GM12878 (cell line): ENCODE measurements at regions of chr21 and their contacts with region 1.

Region 1: DNA sequence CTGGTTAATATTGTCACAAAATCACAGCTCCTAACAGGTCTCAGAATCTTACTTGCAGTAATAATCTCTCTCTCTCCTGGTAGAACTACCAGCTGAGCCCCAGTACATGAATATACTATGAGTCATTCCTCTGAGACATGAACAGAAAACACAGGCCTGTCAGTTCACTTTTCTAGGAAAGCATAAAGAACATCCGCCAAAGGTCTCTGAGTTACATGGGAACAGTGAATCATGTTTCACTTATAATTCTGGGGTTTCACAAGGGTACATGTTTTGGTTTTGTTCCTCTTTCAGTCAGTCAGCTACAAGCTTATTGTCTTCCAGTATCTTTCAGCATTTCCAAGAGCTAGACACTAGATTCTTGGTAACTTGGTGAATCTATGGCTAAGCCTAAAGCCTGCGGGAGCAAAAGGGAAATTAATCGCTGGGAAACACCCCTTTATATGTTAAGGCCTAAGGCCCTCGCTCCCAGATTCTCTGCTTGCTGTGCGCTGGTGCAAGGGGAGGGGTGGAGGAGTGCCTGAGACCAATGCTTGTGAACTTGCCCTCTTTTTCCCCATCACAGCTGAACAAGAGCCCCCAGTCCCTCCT is 31.7 kb downstream of the IFNGR2 start:
- DNase-seq: peak; percentile 99
- ATAC-seq: peak; percentile 89
- H3K4me3 ChIP-seq: no peak overlapping the region
- H3K27ac ChIP-seq: peak overlapping the region; percentile 92
- H3K4me1 ChIP-seq: peaks cover 41% of the 10 kb centered on the region
- H3K27me3 ChIP-seq: no peaks in the 10 kb centered on the region
- CTCF ChIP-seq: no peak
- EP300 ChIP-seq: peak in 1 of 2 experiments; percentile 77; a peak in 2 of 4 replicates
- POLR2A ChIP-seq: no peak
- RAD21 ChIP-seq: no peak

Region 2: DNA sequence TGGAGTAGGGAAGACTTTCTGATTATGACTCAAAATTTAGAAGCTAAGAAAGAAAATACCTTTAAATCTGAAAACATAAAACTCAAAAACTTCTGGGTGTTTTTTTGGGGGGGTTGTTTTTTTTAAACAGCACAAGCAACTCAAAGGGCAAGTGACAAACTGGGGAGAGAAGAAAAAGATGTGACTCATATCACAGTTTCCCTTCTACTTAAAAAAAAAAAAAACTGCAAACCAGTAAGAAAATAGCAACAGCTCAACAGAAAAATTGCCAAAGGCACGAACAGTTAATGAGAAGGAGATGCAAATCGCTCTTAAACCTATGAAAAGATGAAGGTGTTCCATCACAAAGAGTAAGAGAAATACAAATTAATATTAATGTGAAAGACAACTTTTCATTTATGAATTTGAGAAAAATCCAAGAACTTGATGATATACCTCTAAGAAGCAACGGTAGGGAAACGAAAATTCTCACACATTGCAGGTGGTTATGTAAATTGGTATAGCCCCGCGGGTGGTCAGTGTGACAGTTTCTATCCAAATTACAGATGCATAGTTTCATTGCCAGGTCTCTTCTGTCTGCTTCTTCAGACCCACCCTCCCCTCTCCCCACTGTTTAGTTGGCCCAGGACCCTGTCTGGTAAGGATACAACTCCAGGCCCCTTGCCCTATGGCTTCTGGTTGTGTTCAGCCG is 196.2 kb before region 1 on chr21:
- CTCF ChIA-PET with region 1: interaction called, 5 read pairs
- POLR2A ChIA-PET with region 1: interaction called, 4 read pairs
- RAD21 ChIA-PET with region 1: interaction called, 11 read pairs
- SMC1A ChIA-PET with region 1: interaction called, 5 read pairs
- in situ Hi-C with region 1: no loop called
- intact Hi-C with region 1: no loop called
- DNase-seq: peak; percentile 76
- ATAC-seq: peak; percentile 79
- H3K4me3 ChIP-seq: peak overlapping the region; percentile 66
- H3K27ac ChIP-seq: peak overlapping the region; percentile 86
- H3K4me1 ChIP-seq: peaks cover 56% of the 10 kb centered on the region
- H3K27me3 ChIP-seq: no peaks in the 10 kb centered on the region
- CTCF ChIP-seq: no peak
- EP300 ChIP-seq: peak; percentile 79 to 96
- POLR2A ChIP-seq: 0 out of 2 replicates have a peak, but pooled peaks have one; percentile 40
- RAD21 ChIP-seq: 0 out of 2 replicates have a peak, but pooled peaks have one; percentile 10

Region 3: DNA sequence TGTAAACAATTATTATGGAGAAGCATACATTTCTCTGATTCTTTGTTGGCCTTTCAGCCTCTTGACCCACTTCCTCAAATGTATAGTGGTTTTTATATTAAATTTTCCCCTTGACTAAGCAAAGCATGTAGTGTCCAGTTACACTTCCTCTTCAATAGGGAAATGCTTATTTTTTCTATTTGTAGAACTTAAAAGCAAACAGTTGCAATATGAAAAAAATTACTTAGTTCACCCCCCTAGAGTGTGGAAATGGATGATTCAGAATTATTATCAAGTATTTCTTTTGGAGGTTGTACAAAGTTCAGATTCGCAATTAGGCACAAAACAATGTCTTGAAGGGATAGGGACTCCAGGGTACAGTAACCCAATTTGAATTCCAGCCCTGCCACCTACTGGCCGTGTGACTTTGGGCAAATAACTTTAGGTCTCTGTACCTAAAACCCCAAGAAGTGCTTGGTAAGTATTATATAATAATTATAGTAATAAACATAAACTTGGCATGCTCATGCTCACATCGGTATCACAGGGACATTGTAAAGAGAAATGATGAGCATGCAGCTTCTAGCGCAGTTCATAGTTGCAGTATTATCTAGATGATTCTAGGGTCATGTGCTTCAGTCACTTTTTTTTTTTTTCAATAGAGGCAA is 60.3 kb before region 1 on chr21:
- CTCF ChIA-PET with region 1: interaction called, 11 read pairs
- POLR2A ChIA-PET with region 1: interaction called, 12 read pairs
- RAD21 ChIA-PET with region 1: interaction called, 148 read pairs
- SMC1A ChIA-PET with region 1: interaction called, 20 read pairs
- in situ Hi-C with region 1: no loop called
- intact Hi-C with region 1: no loop called
- DNase-seq: no peak
- ATAC-seq: peak; percentile 87
- H3K4me3 ChIP-seq: no peak overlapping the region
- H3K27ac ChIP-seq: no peak overlapping the region
- H3K4me1 ChIP-seq: peaks cover 17% of the 10 kb centered on the region
- H3K27me3 ChIP-seq: no peaks in the 10 kb centered on the region
- CTCF ChIP-seq: peak; percentile 62 to 74 (median 63)
- EP300 ChIP-seq: peak in 1 of 2 experiments; percentile 27; a peak in 1 of 4 replicates
- POLR2A ChIP-seq: no peak
- RAD21 ChIP-seq: peak; percentile 77

Region 4: DNA sequence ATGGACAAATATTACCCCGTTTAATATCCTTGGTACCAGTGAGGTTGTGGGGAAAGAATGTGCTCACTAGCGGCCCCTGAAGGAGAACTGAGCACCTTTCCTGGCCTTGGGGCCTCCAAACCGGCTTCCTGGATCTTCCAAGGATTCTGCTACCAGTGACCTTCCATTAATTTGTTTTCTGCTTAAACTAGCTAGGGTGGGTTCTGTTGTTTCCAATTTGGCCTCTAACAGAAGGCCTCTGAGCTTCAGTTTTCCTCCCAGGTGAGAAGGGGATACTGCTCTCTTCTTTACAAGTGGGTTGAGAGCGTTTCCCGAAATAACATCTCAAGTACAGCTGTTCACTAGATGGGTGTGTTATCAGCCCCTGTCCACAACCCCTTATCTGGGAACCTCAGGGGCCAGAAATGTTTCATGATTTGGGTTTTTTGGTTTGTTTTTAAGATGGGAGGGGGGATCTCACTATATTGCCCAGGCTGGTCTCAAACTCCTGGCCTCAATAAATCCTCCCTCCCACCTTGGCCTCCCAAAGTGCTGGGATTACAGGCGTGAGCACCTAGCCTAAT is 48.6 kb before region 1 on chr21:
- CTCF ChIA-PET with region 1: interaction called, 10 read pairs
- POLR2A ChIA-PET with region 1: interaction called, 12 read pairs
- RAD21 ChIA-PET with region 1: interaction called, 148 read pairs
- SMC1A ChIA-PET with region 1: interaction called, 33 read pairs
- in situ Hi-C with region 1: no loop called
- intact Hi-C with region 1: loop called (anchors 1 kb)
- DNase-seq: no peak
- ATAC-seq: no peak
- H3K4me3 ChIP-seq: no peak overlapping the region
- H3K27ac ChIP-seq: no peak overlapping the region
- H3K4me1 ChIP-seq: peaks cover 35% of the 10 kb centered on the region
- H3K27me3 ChIP-seq: no peaks in the 10 kb centered on the region
- CTCF ChIP-seq: peak in 1 of 3 experiments; percentile 34; a peak in 1 of 6 replicates
- EP300 ChIP-seq: no peak
- POLR2A ChIP-seq: no peak
- RAD21 ChIP-seq: no peak

Region 5: GRCh38 chr21:33403779-33404585 is 30.9 kb before region 1 on chr21:
- CTCF ChIA-PET with region 1: interaction called, 11 read pairs
- POLR2A ChIA-PET with region 1: interaction called, 27 read pairs
- RAD21 ChIA-PET with region 1: interaction called, 69 read pairs
- SMC1A ChIA-PET with region 1: interaction called, 42 read pairs
- in situ Hi-C with region 1: no loop called
- intact Hi-C with region 1: loop called (anchors 2 kb)
- DNase-seq: no peak
- ATAC-seq: peak; percentile 60
- H3K4me3 ChIP-seq: peak overlapping the region; percentile 84
- H3K27ac ChIP-seq: peak overlapping the region; percentile 97
- H3K4me1 ChIP-seq: peaks cover 15% of the 10 kb centered on the region
- H3K27me3 ChIP-seq: no peaks in the 10 kb centered on the region
- CTCF ChIP-seq: no peak
- EP300 ChIP-seq: no peak
- POLR2A ChIP-seq: peak; percentile 77
- RAD21 ChIP-seq: no peak

Region 6: DNA sequence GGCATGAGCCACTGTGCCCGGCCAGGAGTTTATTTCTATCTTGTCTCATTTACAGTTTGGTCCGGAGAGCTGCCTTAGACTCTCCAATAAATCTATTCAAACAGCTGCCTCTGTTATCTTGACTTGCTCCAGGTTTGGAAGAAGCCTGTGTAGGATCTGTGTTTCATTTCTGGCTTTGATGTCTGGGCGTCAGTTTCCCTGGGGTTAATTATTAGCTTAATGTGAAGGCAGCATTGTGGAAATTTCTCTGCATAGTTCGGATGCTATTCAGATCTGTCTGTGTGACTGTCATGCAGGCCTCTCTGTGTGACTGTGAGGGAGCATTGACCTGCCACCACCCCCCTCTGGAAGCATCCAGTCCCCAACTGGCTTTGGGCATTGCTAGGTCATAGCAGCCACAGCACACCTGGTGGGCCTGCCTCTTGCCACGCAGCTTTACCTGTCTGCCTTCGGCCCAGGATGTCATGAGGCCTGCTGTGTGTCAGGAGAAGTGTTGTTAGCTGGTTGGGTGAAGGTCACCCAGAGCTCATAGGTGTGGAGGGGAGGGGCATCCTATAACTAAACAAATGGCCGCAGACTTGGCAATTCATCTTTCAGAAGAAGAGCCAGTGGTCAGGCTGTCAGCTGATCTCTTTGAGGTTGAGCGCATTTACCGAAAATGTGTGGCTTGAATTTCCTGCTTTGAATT is 21.9 kb before region 1 on chr21:
- CTCF ChIA-PET with region 1: interaction called, 4 read pairs
- POLR2A ChIA-PET with region 1: interaction called, 7 read pairs
- RAD21 ChIA-PET with region 1: interaction called, 69 read pairs
- SMC1A ChIA-PET with region 1: interaction called, 42 read pairs
- in situ Hi-C with region 1: no loop called
- intact Hi-C with region 1: no loop called
- DNase-seq: no peak
- ATAC-seq: peak; percentile 84
- H3K4me3 ChIP-seq: peak overlapping the region; percentile 10; the same call in 1 of the 2 replicates
- H3K27ac ChIP-seq: peak overlapping the region; percentile 22; the same call in 1 of the 2 replicates
- H3K4me1 ChIP-seq: peaks cover 22% of the 10 kb centered on the region
- H3K27me3 ChIP-seq: no peaks in the 10 kb centered on the region
- CTCF ChIP-seq: no peak
- EP300 ChIP-seq: no peak
- POLR2A ChIP-seq: peak; percentile 57
- RAD21 ChIP-seq: no peak

Region 7: DNA sequence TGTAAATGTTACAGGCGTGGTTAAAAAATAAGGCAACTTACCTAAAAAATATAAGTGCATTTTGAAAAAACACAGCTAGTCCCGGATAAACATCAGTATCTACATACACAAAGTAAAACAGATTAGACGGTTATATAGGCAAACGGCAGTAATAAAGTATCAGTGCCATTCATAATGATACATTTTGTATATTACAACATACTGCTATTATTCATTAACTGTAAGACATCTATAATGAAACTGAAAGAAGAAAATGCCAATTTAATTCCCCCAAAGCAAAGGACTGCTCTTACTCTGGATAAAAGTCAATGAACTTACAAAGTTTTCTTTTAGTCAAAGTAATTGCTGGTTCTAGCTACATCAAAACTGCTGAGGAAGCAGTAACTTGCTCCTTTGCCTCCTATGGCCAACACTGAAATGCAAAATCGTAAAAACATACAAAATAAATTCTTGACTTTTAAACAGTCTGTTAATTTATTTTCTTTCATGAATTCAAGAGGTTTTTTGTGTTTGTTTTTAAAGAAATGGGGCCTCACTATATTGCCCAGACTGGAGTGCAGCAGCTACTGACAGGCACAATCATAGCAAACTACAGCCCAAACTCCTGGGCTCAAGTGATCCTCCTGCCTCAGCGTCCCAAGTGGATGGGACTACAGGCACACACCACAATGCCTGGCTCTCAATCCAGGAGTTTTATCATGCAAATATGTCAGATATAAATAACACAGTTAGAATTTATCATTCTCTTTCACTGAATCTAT is 21.0 kb after region 1 on chr21:
- CTCF ChIA-PET with region 1: no interaction called
- POLR2A ChIA-PET with region 1: no interaction called
- RAD21 ChIA-PET with region 1: no interaction called
- SMC1A ChIA-PET with region 1: no interaction called
- in situ Hi-C with region 1: no loop called
- intact Hi-C with region 1: no loop called
- DNase-seq: no peak
- ATAC-seq: peak; percentile 46
- H3K4me3 ChIP-seq: no peak overlapping the region
- H3K27ac ChIP-seq: no peak overlapping the region
- H3K4me1 ChIP-seq: no peaks in the 10 kb centered on the region
- H3K27me3 ChIP-seq: no peaks in the 10 kb centered on the region
- CTCF ChIP-seq: no peak
- EP300 ChIP-seq: no peak
- POLR2A ChIP-seq: no peak
- RAD21 ChIP-seq: no peak

Region 8: DNA sequence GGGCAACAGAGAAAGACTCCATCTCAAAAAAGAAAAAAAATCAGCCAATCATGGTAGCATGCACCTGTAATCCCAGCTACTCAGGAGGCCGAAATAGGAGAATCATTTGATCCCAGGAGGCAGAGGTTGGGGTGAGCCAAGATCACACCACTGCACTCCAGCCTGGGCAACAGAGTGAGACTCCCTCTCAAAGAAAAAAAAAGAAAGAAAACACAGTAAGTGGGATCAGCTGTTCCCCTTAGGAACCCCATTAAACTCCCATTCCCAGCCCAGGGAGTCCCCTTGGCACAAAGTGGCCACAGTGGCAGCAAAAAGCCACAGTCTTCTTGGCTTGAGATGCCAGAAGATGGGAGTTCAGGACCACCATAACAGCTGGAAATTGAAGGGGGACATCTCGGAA is 35.8 kb after region 1 on chr21:
- CTCF ChIA-PET with region 1: no interaction called
- POLR2A ChIA-PET with region 1: no interaction called
- RAD21 ChIA-PET with region 1: no interaction called
- SMC1A ChIA-PET with region 1: no interaction called
- in situ Hi-C with region 1: no loop called
- intact Hi-C with region 1: no loop called
- DNase-seq: no peak
- ATAC-seq: no peak
- H3K4me3 ChIP-seq: no peak overlapping the region
- H3K27ac ChIP-seq: no peak overlapping the region
- H3K4me1 ChIP-seq: no peaks in the 10 kb centered on the region
- H3K27me3 ChIP-seq: no peaks in the 10 kb centered on the region
- CTCF ChIP-seq: no peak
- EP300 ChIP-seq: no peak
- POLR2A ChIP-seq: no peak
- RAD21 ChIP-seq: no peak